Endothelial cell of umbilical vein (primary cell): ENCODE measurements at regions of chr4 and their contacts with region 1.

Region 1: GRCh38 chr4:129641179-129641578 is 545.2 kb downstream of the C4orf33 start:
- DNase-seq: peak; percentile 80
- H3K4me3 ChIP-seq: no peak overlapping the region
- H3K27ac ChIP-seq: no peak overlapping the region
- H3K4me1 ChIP-seq: no peaks in the 10 kb centered on the region
- H3K27me3 ChIP-seq: no peaks in the 10 kb centered on the region
- CTCF ChIP-seq: peak; percentile 67 to 71
- POLR2A ChIP-seq: no peak

Region 2: DNA sequence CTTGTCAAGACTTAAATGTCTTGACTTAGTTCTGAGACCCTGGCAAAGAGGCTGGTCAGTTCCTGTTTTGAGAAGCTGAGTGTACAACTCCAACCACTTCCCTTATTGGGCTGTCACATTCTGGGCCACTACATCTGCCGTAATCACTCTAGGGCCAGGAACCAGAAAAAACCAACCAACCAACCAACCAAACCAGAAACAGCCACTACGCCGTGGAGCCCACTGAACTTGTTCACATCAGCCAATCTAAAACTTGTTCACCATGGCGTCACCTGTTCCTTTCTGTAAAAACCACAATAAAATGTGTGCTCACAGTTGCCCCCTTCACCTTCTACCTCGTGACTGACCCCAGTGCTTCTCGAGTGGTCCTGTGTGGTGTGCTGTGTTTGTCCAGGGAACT is 724.3 kb before region 1 on chr4:
- CTCF ChIA-PET with region 1: no interaction called
- POLR2A ChIA-PET with region 1: no interaction called
- dilution Hi-C with region 1: no loop called
- intact Hi-C with region 1: no loop called
- DNase-seq: no peak
- H3K4me3 ChIP-seq: no peak overlapping the region
- H3K27ac ChIP-seq: no peak overlapping the region
- H3K4me1 ChIP-seq: no peaks in the 10 kb centered on the region
- H3K27me3 ChIP-seq: no peaks in the 10 kb centered on the region
- CTCF ChIP-seq: no peak
- POLR2A ChIP-seq: no peak

Region 3: DNA sequence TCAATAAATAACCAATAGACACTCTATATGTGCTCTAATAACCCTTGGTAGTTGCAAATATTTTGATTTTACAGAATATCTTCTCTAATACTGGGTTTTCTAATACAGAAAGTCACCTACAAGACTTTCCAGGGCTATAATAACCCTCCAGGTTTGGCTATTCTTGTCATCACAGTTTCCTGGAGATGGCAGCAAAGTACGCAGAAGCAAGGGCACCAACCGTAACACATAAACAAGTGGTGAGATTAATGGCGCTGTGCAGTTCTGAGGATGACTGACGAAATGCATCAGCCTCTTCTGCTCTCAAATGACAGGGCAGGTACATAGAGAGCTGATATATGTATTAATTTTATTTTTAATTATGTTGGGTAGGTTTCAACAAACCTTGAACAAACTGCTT is 422.8 kb before region 1 on chr4:
- CTCF ChIA-PET with region 1: no interaction called
- POLR2A ChIA-PET with region 1: no interaction called
- dilution Hi-C with region 1: no loop called
- intact Hi-C with region 1: loop called (anchors 1 kb)
- DNase-seq: peak; percentile 24
- H3K4me3 ChIP-seq: no peak overlapping the region
- H3K27ac ChIP-seq: no peak overlapping the region
- H3K4me1 ChIP-seq: no peaks in the 10 kb centered on the region
- H3K27me3 ChIP-seq: no peaks in the 10 kb centered on the region
- CTCF ChIP-seq: no peak
- POLR2A ChIP-seq: no peak

Region 4: DNA sequence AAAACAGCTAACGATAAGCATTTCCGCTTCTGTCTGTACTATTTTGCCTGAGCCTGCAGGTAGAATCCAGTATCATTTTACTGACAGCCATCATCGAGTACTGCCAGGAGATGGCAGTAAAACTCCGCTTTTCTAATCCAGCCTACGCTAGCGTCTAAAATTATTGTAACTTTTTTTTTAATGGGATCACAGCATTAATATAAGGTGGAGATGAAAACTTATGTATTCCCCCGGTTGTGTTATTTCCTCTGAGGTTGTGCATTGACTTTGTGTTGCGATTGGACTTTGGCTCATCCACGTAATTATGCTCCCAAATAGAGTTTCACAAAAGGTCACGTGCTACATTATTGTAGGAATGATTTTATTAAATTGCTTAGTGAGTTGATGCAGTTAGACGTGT is 297.1 kb before region 1 on chr4:
- CTCF ChIA-PET with region 1: interaction called, 12 read pairs
- POLR2A ChIA-PET with region 1: no interaction called
- dilution Hi-C with region 1: no loop called
- intact Hi-C with region 1: no loop called
- DNase-seq: peak; percentile 50
- H3K4me3 ChIP-seq: no peak overlapping the region
- H3K27ac ChIP-seq: no peak overlapping the region
- H3K4me1 ChIP-seq: no peaks in the 10 kb centered on the region
- H3K27me3 ChIP-seq: no peaks in the 10 kb centered on the region
- CTCF ChIP-seq: peak; percentile 56 to 60
- POLR2A ChIP-seq: no peak

Region 5: DNA sequence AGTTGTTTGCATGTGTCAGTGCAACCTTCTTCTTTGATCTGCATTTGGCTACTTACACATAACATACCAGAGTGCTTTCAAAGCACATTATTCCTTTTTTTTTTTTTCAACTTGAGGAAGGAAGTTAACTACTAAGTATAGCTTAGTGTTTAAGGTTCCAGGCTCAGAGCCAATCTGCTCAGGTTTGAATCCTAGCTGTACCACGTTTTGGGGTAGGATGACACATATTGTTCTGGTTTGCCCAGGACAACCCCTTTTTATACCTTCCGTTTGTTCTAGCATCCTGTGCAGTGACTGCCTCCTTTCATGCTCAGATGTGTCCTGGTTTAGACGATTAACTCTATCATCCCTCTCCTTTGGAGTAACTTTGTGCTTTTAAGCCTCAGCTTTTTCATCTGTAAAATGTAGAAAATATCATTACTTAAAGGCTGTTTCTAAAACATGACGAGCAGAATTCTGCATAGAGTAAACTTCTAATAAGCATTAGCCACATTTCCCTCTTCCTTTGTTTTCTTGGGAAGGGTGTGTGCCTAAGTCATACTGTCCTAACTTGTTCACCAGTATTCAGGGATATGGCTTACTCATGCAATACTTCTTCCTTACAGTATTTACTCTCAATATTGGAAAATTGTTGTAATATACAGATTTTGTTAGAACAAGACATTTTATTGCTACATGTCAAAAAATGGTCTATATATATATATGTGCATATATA is 263.9 kb before region 1 on chr4:
- CTCF ChIA-PET with region 1: interaction called, 10 read pairs
- POLR2A ChIA-PET with region 1: no interaction called
- dilution Hi-C with region 1: no loop called
- intact Hi-C with region 1: no loop called
- DNase-seq: peak; percentile 69
- H3K4me3 ChIP-seq: no peak overlapping the region
- H3K27ac ChIP-seq: no peak overlapping the region
- H3K4me1 ChIP-seq: peaks cover 13% of the 10 kb centered on the region
- H3K27me3 ChIP-seq: no peaks in the 10 kb centered on the region
- CTCF ChIP-seq: no peak
- POLR2A ChIP-seq: no peak

Region 6: GRCh38 chr4:129526814-129527213 is 114.4 kb before region 1 on chr4:
- CTCF ChIA-PET with region 1: interaction called, 160 read pairs
- POLR2A ChIA-PET with region 1: no interaction called
- dilution Hi-C with region 1: no loop called
- intact Hi-C with region 1: loop called (anchors 1 kb)
- DNase-seq: peak; percentile 57
- H3K4me3 ChIP-seq: no peak overlapping the region
- H3K27ac ChIP-seq: no peak overlapping the region
- H3K4me1 ChIP-seq: no peaks in the 10 kb centered on the region
- H3K27me3 ChIP-seq: no peaks in the 10 kb centered on the region
- CTCF ChIP-seq: no peak
- POLR2A ChIP-seq: no peak

Region 7: GRCh38 chr4:129532573-129532972 is 108.6 kb before region 1 on chr4:
- CTCF ChIA-PET with region 1: interaction called, 160 read pairs
- POLR2A ChIA-PET with region 1: no interaction called
- dilution Hi-C with region 1: no loop called
- intact Hi-C with region 1: loop called (anchors 1 kb)
- DNase-seq: peak; percentile 4
- H3K4me3 ChIP-seq: no peak overlapping the region
- H3K27ac ChIP-seq: no peak overlapping the region
- H3K4me1 ChIP-seq: no peaks in the 10 kb centered on the region
- H3K27me3 ChIP-seq: no peaks in the 10 kb centered on the region
- CTCF ChIP-seq: no peak
- POLR2A ChIP-seq: no peak

Region 8: GRCh38 chr4:129623233-129623875 is 17.8 kb before region 1 on chr4:
- CTCF ChIA-PET with region 1: interaction called, 11 read pairs
- POLR2A ChIA-PET with region 1: no interaction called
- dilution Hi-C with region 1: no loop called
- intact Hi-C with region 1: no loop called
- DNase-seq: no peak
- H3K4me3 ChIP-seq: no peak overlapping the region
- H3K27ac ChIP-seq: no peak overlapping the region
- H3K4me1 ChIP-seq: no peaks in the 10 kb centered on the region
- H3K27me3 ChIP-seq: no peaks in the 10 kb centered on the region
- CTCF ChIP-seq: no peak
- POLR2A ChIP-seq: no peak

Region 9: DNA sequence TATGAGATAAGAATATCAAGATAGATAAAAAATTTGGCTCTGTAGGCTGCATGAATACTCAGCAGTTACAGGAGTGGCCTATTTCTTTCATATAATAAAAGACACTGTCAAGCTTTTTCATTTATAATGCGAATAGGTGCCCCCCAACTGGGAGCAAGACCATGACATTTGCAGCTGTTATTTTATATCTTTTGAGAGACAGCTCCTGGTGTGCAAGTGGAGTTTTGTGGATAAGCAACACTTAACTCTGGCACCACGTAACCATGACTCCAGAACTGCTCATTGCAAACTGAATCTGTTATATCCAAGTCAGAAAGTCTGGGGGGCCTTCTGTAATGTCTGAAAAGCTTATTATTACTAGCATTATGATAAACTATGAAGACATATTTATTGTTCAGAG is 827.2 kb after region 1 on chr4:
- CTCF ChIA-PET with region 1: no interaction called
- POLR2A ChIA-PET with region 1: no interaction called
- dilution Hi-C with region 1: no loop called
- intact Hi-C with region 1: no loop called
- DNase-seq: no peak
- H3K4me3 ChIP-seq: no peak overlapping the region
- H3K27ac ChIP-seq: no peak overlapping the region
- H3K4me1 ChIP-seq: no peaks in the 10 kb centered on the region
- H3K27me3 ChIP-seq: no peaks in the 10 kb centered on the region
- CTCF ChIP-seq: no peak
- POLR2A ChIP-seq: no peak